ENCODE measurements at regions of chr14 and their contacts with region 1.

Region 1: GRCh38 chr14:22986508-22987054 is 4.2 kb upstream of the AJUBA start:
- DNase-seq: peak; percentile 86
- H3K4me3 ChIP-seq: no peak overlapping the region
- H3K27ac ChIP-seq: no peak overlapping the region
- H3K4me1 ChIP-seq: peaks cover 6% of the 10 kb centered on the region
- H3K27me3 ChIP-seq: no peaks in the 10 kb centered on the region
- CTCF ChIP-seq: peak; percentile 78 to 82
- POLR2A ChIP-seq: no peak

Region 2: DNA sequence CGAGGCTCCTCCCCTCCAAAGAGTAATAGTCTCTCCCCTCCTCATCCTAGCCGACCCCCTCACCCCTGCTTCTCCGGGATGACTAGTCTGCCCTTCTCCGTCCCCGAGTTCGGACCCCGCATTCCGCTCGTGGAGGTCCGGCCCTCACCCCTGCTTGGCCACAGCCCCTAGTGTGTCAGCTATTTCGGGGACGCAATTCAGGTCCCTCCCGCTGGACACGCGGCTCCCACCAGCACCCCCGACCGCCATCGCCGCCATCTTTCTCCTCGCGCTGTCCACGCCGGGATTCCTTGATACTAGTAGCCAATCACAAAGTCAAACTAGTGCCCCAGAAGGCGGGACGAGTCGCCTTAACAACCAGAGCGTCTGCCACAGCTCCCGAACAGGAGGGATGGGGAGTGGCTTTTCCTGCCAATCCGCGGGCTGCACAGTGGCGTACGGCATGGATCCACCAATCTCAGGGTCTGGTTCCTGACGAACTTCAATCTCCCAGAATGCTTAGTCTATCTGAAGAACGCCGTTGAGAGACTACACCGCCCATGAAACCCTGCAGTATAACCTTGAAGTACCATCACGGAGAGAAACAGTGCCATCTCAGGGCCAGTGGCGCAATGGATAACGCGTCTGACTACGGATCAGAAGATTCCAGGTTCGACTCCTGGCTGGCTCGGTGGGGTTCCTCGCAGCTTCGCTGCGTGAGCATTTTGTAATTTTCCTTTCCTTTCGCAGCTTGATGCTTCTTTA is 57.3 kb before region 1 on chr14 and contains the start of gene PRMT5:
- CTCF ChIA-PET with region 1: interaction called, 46 read pairs
- POLR2A ChIA-PET with region 1: interaction called, 6 read pairs
- dilution Hi-C with region 1: no loop called
- intact Hi-C with region 1: loop called (anchors 1 kb)
- DNase-seq: peak; percentile 100
- H3K4me3 ChIP-seq: peak within 1 kb of the TSS; percentile 66 to 95 (median 81)
- H3K27ac ChIP-seq: peak within 1 kb of the TSS; percentile 68
- H3K4me1 ChIP-seq: peaks cover 16% of the 10 kb centered on the region
- H3K27me3 ChIP-seq: no peaks in the 10 kb centered on the region
- CTCF ChIP-seq: no peak
- POLR2A ChIP-seq: peak; percentile 64
- total RNA-seq, gene PRMT5: 67.2 and 73.1 TPM in 2 replicates

Region 3: GRCh38 chr14:22973217-22974032 is 13.2 kb before region 1 on chr14:
- CTCF ChIA-PET with region 1: interaction called, 125 read pairs
- POLR2A ChIA-PET with region 1: interaction called, 8 read pairs
- dilution Hi-C with region 1: no loop called
- intact Hi-C with region 1: loop called (anchors 1 kb)
- DNase-seq: peak; percentile 72
- H3K4me3 ChIP-seq: no peak overlapping the region
- H3K27ac ChIP-seq: no peak overlapping the region
- H3K4me1 ChIP-seq: peaks cover 31% of the 10 kb centered on the region
- H3K27me3 ChIP-seq: no peaks in the 10 kb centered on the region
- CTCF ChIP-seq: peak; percentile 53 to 54
- POLR2A ChIP-seq: no peak

Region 4: GRCh38 chr14:23025151-23025814 is 38.7 kb after region 1 on chr14:
- CTCF ChIA-PET with region 1: interaction called, 15 read pairs
- POLR2A ChIA-PET with region 1: no interaction called
- dilution Hi-C with region 1: no loop called
- intact Hi-C with region 1: no loop called
- DNase-seq: no peak
- H3K4me3 ChIP-seq: no peak overlapping the region
- H3K27ac ChIP-seq: no peak overlapping the region
- H3K4me1 ChIP-seq: peaks cover 4% of the 10 kb centered on the region
- H3K27me3 ChIP-seq: no peaks in the 10 kb centered on the region
- CTCF ChIP-seq: no peak
- POLR2A ChIP-seq: no peak

Region 5: DNA sequence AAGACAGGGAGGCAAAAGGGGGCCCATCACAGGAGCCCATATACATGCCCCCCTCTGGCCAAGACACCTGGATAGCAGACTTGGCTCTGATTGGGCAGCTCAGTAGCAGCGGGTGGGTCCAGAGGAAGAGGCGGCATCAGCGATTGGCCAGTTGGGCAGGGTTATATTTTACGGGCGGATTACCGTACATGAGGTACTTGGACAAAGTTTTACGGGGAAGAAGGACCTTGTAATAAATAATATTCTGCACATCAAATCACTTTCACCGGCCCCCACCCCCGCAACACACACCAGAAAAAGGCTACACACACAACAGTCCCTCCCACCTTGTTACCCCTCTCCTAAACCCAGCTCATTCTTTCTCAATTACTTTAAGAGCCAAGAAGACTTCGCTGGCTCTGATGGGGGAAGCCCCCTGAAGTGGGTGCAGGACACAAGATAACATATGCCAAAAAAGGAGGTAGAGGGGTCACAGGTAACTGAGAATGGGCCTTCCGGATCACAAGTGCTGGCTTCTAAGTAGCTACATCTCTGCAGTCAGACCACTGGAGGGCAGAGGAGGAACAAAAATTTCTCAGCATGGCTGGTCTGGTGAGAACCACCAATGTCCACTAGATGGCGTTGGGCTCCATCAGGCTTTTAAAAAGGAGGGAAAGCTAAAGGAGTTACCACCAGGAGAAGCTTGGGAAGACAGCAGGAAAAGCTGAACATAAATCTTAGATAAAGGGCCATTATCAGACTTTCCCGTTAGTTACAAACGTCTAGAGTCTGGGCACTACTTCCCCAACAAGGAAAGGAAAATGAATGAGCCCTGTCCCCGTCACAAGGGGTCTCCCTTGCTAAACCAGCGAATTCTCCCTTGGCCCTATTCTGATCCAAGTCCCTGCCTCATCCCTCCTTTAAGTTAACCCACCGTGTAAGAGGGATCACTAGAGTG is 82.2 kb after region 1 on chr14:
- CTCF ChIA-PET with region 1: interaction called, 1,071 read pairs
- POLR2A ChIA-PET with region 1: interaction called, 5 read pairs
- dilution Hi-C with region 1: loop called (anchors 10 kb)
- intact Hi-C with region 1: no loop called
- DNase-seq: peak; percentile 97
- H3K4me3 ChIP-seq: no peak overlapping the region
- H3K27ac ChIP-seq: peak overlapping the region; percentile 35
- H3K4me1 ChIP-seq: peaks cover 28% of the 10 kb centered on the region
- H3K27me3 ChIP-seq: no peaks in the 10 kb centered on the region
- CTCF ChIP-seq: peak; percentile 93 to 100
- POLR2A ChIP-seq: no peak